ENCODE measurements at regions of chr2 and their contacts with region 1.

Region 1: GRCh38 chr2:233832869-233833311 is 21.4 kb downstream of the HJURP start:
- DNase-seq: peak; percentile 38 to 84
- H3K4me3 ChIP-seq: no peak overlapping the region
- H3K27ac ChIP-seq: no peak overlapping the region
- H3K4me1 ChIP-seq: no peaks in the 10 kb centered on the region
- H3K27me3 ChIP-seq: no peaks in the 10 kb centered on the region
- CTCF ChIP-seq: peak; percentile 70 to 89 (median 79)
- EP300 ChIP-seq: no peak
- POLR2A ChIP-seq: no peak
- RAD21 ChIP-seq: peak; percentile 87 to 88

Region 2: DNA sequence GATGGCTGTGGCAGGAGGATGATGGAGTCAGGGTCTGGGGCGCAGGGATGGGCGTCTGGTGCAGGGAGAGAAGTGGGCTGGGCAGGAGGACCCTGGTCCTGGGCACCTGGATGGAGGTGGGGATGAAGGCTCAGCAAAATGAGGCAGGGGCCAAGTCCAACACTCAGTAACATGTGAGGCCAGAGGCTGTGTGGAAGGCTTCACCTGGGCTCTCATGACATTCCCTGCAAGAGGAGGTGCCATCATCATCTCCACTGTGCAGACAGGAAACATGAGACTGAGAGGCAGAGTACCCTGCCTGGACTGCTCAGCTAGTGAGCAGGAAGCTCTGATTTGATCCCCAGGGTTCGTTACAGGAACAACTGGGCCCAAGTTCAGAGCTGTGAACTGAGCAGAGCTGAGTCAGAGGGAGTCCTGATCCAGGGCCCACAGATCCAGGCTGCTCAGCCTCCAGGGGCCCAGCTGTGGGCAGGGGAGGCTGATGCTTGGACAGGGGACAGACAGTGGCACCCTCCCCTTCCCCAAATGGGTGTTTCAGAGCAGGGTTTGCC is 15.5 kb before region 1 on chr2:
- CTCF ChIA-PET with region 1: interaction called, 11 read pairs
- POLR2A ChIA-PET with region 1: no interaction called
- DNase-seq: no peak
- H3K4me3 ChIP-seq: no peak overlapping the region
- H3K27ac ChIP-seq: no peak overlapping the region
- H3K4me1 ChIP-seq: no peaks in the 10 kb centered on the region
- H3K27me3 ChIP-seq: no peaks in the 10 kb centered on the region
- CTCF ChIP-seq: no peak
- EP300 ChIP-seq: no peak
- POLR2A ChIP-seq: no peak
- RAD21 ChIP-seq: no peak